CD4-positive, alpha-beta T cell (primary cell): ENCODE measurements at regions of chr9 and their contacts with region 1.

Region 1: DNA sequence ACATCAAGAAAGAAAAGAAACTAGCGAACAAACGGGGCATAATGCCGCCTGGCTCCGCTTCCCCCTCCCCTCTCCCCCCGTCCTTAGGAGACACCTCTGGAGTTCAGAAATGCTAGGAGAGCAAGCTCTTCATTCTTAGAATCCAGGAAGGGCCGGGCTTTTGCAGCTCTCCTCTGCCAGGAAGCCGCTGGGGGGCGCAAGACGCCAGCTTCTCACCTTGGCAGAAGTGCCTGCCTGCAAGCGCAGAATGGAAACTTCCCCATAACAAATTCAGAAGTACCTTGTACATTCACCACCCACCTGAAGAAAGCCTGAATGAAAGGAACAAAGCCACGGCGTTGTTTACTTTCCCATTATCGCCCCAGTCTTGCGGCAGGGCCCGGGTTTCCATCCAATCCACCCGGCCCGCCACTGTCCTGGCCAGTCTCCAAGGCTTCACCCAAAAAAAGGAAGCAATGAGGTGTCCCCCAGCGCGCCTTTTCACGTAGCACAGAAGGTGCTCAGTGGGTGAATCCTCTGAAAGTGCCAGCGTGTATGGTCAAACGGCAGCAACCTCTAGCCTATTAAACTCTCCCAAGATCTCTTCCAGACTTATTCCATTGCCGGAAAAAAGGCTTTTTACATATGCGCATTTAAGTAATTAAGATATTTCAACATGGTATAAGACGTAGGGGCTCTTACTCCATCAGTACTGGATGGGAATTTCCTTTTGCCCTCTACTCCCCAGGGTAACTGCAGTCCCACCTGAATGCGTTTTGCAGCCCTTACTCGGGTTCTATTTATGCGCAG is 1.6 kb upstream of the GADD45G start:
- DNase-seq: peak; percentile 81 to 94 (median 86)
- ATAC-seq: peak; percentile 26
- H3K4me3 ChIP-seq: peak overlapping the region; percentile 71
- H3K4me3 Mint-ChIP-seq: peak overlapping the region; percentile 89
- H3K27ac ChIP-seq: no peak overlapping the region
- H3K27ac Mint-ChIP-seq: peak overlapping the region; percentile 64
- H3K4me1 ChIP-seq: peaks cover 40% of the 10 kb centered on the region
- H3K4me1 Mint-ChIP-seq: peaks cover 29% of the 10 kb centered on the region
- H3K27me3 ChIP-seq: no peaks in the 10 kb centered on the region
- H3K27me3 Mint-ChIP-seq: no peaks in the 10 kb centered on the region
- CTCF ChIP-seq: peak; percentile 62

Region 2: GRCh38 chr9:89466451-89467277 is 136.5 kb before region 1 on chr9:
- CTCF ChIA-PET with region 1: no interaction called
- POLR2A ChIA-PET with region 1: no interaction called
- intact Hi-C with region 1: no loop called
- DNase-seq: peak in 2 of 14 experiments; percentile 43 to 52
- ATAC-seq: peak; percentile 2
- H3K4me3 ChIP-seq: peak overlapping the region; percentile 12
- H3K4me3 Mint-ChIP-seq: peak overlapping the region; percentile 76
- H3K27ac ChIP-seq: peak overlapping the region; percentile 64 to 84
- H3K27ac Mint-ChIP-seq: peak overlapping the region; percentile 96
- H3K4me1 ChIP-seq: peaks cover 93% of the 10 kb centered on the region
- H3K4me1 Mint-ChIP-seq: peaks cover 97% of the 10 kb centered on the region
- H3K27me3 ChIP-seq: no peaks in the 10 kb centered on the region
- H3K27me3 Mint-ChIP-seq: no peaks in the 10 kb centered on the region
- CTCF ChIP-seq: no peak

Region 3: GRCh38 chr9:89505911-89506310 is 97.3 kb before region 1 on chr9:
- CTCF ChIA-PET with region 1: no interaction called
- POLR2A ChIA-PET with region 1: no interaction called
- intact Hi-C with region 1: no loop called
- DNase-seq: no peak
- ATAC-seq: no peak
- H3K4me3 ChIP-seq: no peak overlapping the region
- H3K4me3 Mint-ChIP-seq: no peak overlapping the region
- H3K27ac ChIP-seq: no peak overlapping the region
- H3K27ac Mint-ChIP-seq: no peak overlapping the region
- H3K4me1 ChIP-seq: peaks cover 54% of the 10 kb centered on the region
- H3K4me1 Mint-ChIP-seq: peaks cover 85% of the 10 kb centered on the region
- H3K27me3 ChIP-seq: no peaks in the 10 kb centered on the region
- H3K27me3 Mint-ChIP-seq: no peaks in the 10 kb centered on the region
- CTCF ChIP-seq: no peak

Region 4: GRCh38 chr9:89690334-89690912 is 87.3 kb after region 1 on chr9:
- CTCF ChIA-PET with region 1: no interaction called
- POLR2A ChIA-PET with region 1: no interaction called
- intact Hi-C with region 1: no loop called
- DNase-seq: peak in 3 of 14 experiments; percentile 27 to 38 (median 35)
- ATAC-seq: no peak
- H3K4me3 ChIP-seq: no peak overlapping the region
- H3K4me3 Mint-ChIP-seq: no peak overlapping the region
- H3K27ac ChIP-seq: no peak overlapping the region
- H3K27ac Mint-ChIP-seq: peak overlapping the region; percentile 26
- H3K4me1 ChIP-seq: peaks cover 7% of the 10 kb centered on the region
- H3K4me1 Mint-ChIP-seq: peaks cover 16% of the 10 kb centered on the region
- H3K27me3 ChIP-seq: no peaks in the 10 kb centered on the region
- H3K27me3 Mint-ChIP-seq: no peaks in the 10 kb centered on the region
- CTCF ChIP-seq: no peak

Region 5: DNA sequence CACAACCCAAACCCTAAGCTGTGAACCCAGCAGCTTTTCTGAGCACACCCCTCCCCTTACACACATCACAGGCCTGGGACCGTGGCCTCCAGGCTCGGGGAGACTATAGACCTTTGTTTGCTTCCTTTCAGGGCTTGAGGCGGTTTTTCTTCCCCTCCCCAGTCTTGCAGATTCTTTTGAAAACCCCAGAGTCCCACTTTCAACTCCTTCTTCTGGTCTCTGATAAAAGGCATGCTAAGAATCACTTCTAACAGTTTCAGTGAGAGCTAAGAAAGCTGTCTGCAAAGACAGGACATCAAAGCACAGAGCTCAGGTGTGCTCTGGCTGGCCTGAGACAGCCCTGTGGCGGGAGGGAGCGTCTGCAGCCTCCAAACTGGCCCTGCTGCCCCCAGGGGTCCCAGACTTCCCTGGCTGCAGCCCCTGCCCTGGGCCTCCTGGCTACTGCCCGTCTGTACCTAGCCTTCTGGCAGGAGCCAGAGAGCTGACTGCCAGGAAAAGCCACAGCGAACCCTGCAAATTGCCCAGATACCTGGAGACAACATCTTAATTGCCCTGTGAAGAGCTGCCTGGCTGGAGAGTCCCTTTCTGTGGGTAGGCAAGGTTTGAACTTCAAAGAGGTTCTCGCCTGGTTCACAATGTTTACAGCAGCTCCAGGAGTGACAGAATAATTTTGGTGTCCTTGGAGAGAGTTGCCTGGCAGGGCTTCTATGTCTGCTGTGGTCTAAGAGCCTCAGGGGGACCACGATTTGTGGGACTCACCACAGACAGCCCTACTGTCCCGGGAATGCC is 140.6 kb after region 1 on chr9:
- CTCF ChIA-PET with region 1: interaction called, 5 read pairs
- POLR2A ChIA-PET with region 1: interaction called, 3 read pairs
- intact Hi-C with region 1: loop called (anchors 5 kb)
- DNase-seq: peak; percentile 40 to 87 (median 55)
- ATAC-seq: peak; percentile 81
- H3K4me3 ChIP-seq: peak overlapping the region; percentile 22
- H3K4me3 Mint-ChIP-seq: peak overlapping the region; percentile 72
- H3K27ac ChIP-seq: peak overlapping the region; percentile 17 to 64
- H3K27ac Mint-ChIP-seq: peak overlapping the region; percentile 74
- H3K4me1 ChIP-seq: peaks cover 91% of the 10 kb centered on the region
- H3K4me1 Mint-ChIP-seq: peaks cover 85% of the 10 kb centered on the region
- H3K27me3 ChIP-seq: no peaks in the 10 kb centered on the region
- H3K27me3 Mint-ChIP-seq: no peaks in the 10 kb centered on the region
- CTCF ChIP-seq: no peak

Region 6: DNA sequence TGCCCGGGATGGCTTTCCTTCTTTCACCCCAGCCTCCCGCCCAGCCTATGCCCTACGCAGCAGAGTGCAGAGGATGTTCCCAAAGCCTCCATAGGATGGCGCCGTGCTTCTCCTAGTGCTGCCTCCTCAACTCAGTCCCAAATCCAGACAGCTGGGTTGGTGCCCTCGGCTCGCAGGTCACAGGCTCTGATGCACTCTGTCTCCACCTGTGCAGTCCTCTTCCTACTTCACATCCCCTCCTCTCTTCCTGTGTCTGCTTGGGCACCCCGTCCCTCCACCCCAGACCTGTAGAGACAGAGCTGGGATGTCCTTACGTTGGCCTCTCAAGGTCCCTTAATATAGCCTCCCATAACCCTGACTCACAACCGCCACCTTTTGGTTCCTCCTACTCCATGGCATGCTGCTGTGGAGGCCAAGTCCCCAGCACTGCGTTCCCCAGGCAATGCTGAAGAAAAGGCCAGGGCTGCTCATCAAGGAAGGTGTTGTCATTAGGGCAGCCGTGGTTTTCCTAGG is 316.1 kb after region 1 on chr9:
- CTCF ChIA-PET with region 1: interaction called, 3 read pairs
- POLR2A ChIA-PET with region 1: interaction called, 5 read pairs
- intact Hi-C with region 1: loop called (anchors 1 to 2 kb)
- DNase-seq: peak in 10 of 14 experiments; percentile 4 to 64 (median 11)
- ATAC-seq: peak; percentile 68
- H3K4me3 ChIP-seq: no peak overlapping the region
- H3K4me3 Mint-ChIP-seq: no peak overlapping the region
- H3K27ac ChIP-seq: no peak overlapping the region
- H3K27ac Mint-ChIP-seq: no peak overlapping the region
- H3K4me1 ChIP-seq: peaks cover 4% of the 10 kb centered on the region
- H3K4me1 Mint-ChIP-seq: peaks cover 9% of the 10 kb centered on the region
- H3K27me3 ChIP-seq: no peaks in the 10 kb centered on the region
- H3K27me3 Mint-ChIP-seq: peaks cover 26% of the 10 kb centered on the region
- CTCF ChIP-seq: no peak

Region 7: DNA sequence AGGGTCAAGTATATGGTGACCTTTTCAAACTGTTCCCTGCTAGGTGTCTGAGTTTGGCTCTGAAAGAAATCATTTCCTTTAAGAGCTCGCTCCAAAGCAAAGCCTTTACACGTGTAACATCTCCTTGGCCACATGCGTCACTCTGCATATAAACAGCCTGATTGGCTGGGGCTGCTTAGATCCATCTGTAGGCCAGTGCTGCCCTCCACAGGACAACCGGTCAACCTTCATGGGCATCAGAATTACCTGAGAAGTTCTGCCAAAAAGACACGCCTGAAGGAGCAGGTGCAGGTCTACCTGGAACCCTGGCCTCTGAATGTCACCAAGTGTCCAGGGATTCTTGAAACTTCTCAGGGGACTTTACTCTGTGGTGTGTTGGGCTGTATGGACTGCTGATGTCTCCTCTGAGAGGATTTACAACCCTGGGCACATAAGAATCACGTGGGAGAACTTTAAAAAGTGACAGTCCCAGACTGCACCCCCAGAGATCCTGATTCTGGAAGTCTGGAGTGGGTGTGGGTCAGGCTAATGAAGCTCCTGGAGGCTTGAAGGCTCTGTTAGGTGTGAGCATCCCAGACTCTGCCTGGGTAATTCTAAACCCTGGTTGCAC is 499.2 kb after region 1 on chr9:
- CTCF ChIA-PET with region 1: interaction called, 8 read pairs
- POLR2A ChIA-PET with region 1: interaction called, 27 read pairs
- intact Hi-C with region 1: loop called (anchors 1 kb)
- DNase-seq: peak; percentile 58 to 91 (median 71)
- ATAC-seq: peak; percentile 100
- H3K4me3 ChIP-seq: no peak overlapping the region
- H3K4me3 Mint-ChIP-seq: no peak overlapping the region
- H3K27ac ChIP-seq: no peak overlapping the region
- H3K27ac Mint-ChIP-seq: no peak overlapping the region
- H3K4me1 ChIP-seq: peaks cover 3% of the 10 kb centered on the region
- H3K4me1 Mint-ChIP-seq: peaks cover 7% of the 10 kb centered on the region
- H3K27me3 ChIP-seq: peaks cover 0 to 4% of the 10 kb centered on the region in 2 experiments
- H3K27me3 Mint-ChIP-seq: peaks cover 6% of the 10 kb centered on the region
- CTCF ChIP-seq: peak; percentile 65

Region 8: GRCh38 chr9:90219548-90220118 is 616.5 kb after region 1 on chr9:
- CTCF ChIA-PET with region 1: no interaction called
- POLR2A ChIA-PET with region 1: no interaction called
- intact Hi-C with region 1: loop called (anchors 2 to 5 kb)
- DNase-seq: peak in 12 of 14 experiments; percentile 4 to 58 (median 20)
- ATAC-seq: peak; percentile 48
- H3K4me3 ChIP-seq: no peak overlapping the region
- H3K4me3 Mint-ChIP-seq: no peak overlapping the region
- H3K27ac ChIP-seq: no peak overlapping the region
- H3K27ac Mint-ChIP-seq: no peak overlapping the region
- H3K4me1 ChIP-seq: no peaks in the 10 kb centered on the region
- H3K4me1 Mint-ChIP-seq: no peaks in the 10 kb centered on the region
- H3K27me3 ChIP-seq: peaks cover 3 to 8% of the 10 kb centered on the region in 2 experiments
- H3K27me3 Mint-ChIP-seq: peaks cover 48% of the 10 kb centered on the region
- CTCF ChIP-seq: peak; percentile 25

Region 9: GRCh38 chr9:90870621-90871326 is 1267.6 kb after region 1 on chr9:
- CTCF ChIA-PET with region 1: interaction called, 5 read pairs
- POLR2A ChIA-PET with region 1: no interaction called
- intact Hi-C with region 1: loop called (anchors 1 to 2 kb)
- DNase-seq: peak in 12 of 14 experiments; percentile 4 to 72 (median 16)
- ATAC-seq: no peak
- H3K4me3 ChIP-seq: no peak overlapping the region
- H3K4me3 Mint-ChIP-seq: no peak overlapping the region
- H3K27ac ChIP-seq: no peak overlapping the region
- H3K27ac Mint-ChIP-seq: no peak overlapping the region
- H3K4me1 ChIP-seq: no peaks in the 10 kb centered on the region
- H3K4me1 Mint-ChIP-seq: no peaks in the 10 kb centered on the region
- H3K27me3 ChIP-seq: no peaks in the 10 kb centered on the region
- H3K27me3 Mint-ChIP-seq: peaks cover 17% of the 10 kb centered on the region
- CTCF ChIP-seq: peak; percentile 98

Region 10: GRCh38 chr9:91422758-91423711 is 1819.9 kb after region 1 on chr9:
- CTCF ChIA-PET with region 1: no interaction called
- POLR2A ChIA-PET with region 1: no interaction called
- intact Hi-C with region 1: loop called in 1 of 2 experiments (anchors 5 kb)
- DNase-seq: peak; percentile 22 to 85 (median 49)
- ATAC-seq: peak; percentile 50
- H3K4me3 ChIP-seq: peak overlapping the region; percentile 73
- H3K4me3 Mint-ChIP-seq: peak overlapping the region; percentile 96
- H3K27ac ChIP-seq: no peak overlapping the region
- H3K27ac Mint-ChIP-seq: peak overlapping the region; percentile 82
- H3K4me1 ChIP-seq: peaks cover 45% of the 10 kb centered on the region
- H3K4me1 Mint-ChIP-seq: peaks cover 45% of the 10 kb centered on the region
- H3K27me3 ChIP-seq: peaks cover 22 to 42% of the 10 kb centered on the region in 2 experiments
- H3K27me3 Mint-ChIP-seq: peaks cover 52% of the 10 kb centered on the region
- CTCF ChIP-seq: peak; percentile 16